Heart right ventricle (tissue), 16 donors: ENCODE measurements at regions of chr12 and their contacts with region 1.

Region 1: GRCh38 chr12:67873355-67873754 is 115.9 kb upstream of the IFNG-AS1 start:
- DNase-seq: no peak
- ATAC-seq: no peak
- H3K4me3 ChIP-seq: no peak overlapping the region
- H3K27ac ChIP-seq: no peak overlapping the region
- H3K4me1 ChIP-seq: no peaks in the 10 kb centered on the region
- H3K27me3 ChIP-seq: no peaks in the 10 kb centered on the region
- CTCF ChIP-seq: no peak

Region 2: GRCh38 chr12:68012712-68013111 is 139.4 kb after region 1 on chr12:
- intact Hi-C with region 1: no loop called
- DNase-seq: no peak
- ATAC-seq: no peak
- H3K4me3 ChIP-seq: no peak overlapping the region
- H3K27ac ChIP-seq: no peak overlapping the region
- H3K4me1 ChIP-seq: no peaks in the 10 kb centered on the region
- H3K27me3 ChIP-seq: no peaks in the 10 kb centered on the region
- CTCF ChIP-seq: no peak

Region 3: GRCh38 chr12:68158432-68158831 is 285.1 kb after region 1 on chr12:
- intact Hi-C with region 1: no loop called
- DNase-seq: no peak
- ATAC-seq: no peak
- H3K4me3 ChIP-seq: peak overlapping the region in 1 of 10 donors; percentile 24
- H3K27ac ChIP-seq: no peak overlapping the region
- H3K4me1 ChIP-seq: no peaks in the 10 kb centered on the region
- H3K27me3 ChIP-seq: no peaks in the 10 kb centered on the region
- CTCF ChIP-seq: peak in 6 of 9 donors; percentile 10 to 38 (median 21)

Region 4: GRCh38 chr12:69765515-69765914 is 1892.2 kb after region 1 on chr12:
- intact Hi-C with region 1: loop called in 1 of 10 experiments (anchors 10 kb)
- DNase-seq: no peak
- ATAC-seq: no peak
- H3K4me3 ChIP-seq: no peak overlapping the region
- H3K27ac ChIP-seq: no peak overlapping the region
- H3K4me1 ChIP-seq: no peaks in the 10 kb centered on the region
- H3K27me3 ChIP-seq: no peaks in the 10 kb centered on the region
- CTCF ChIP-seq: no peak